Naive thymus-derived CD4-positive, alpha-beta T cell (primary cell): ENCODE measurements at regions of chr2 and their contacts with region 1.

Region 1: GRCh38 chr2:134897932-134898331 is 20.7 kb upstream of the CCNT2 start:
- DNase-seq: peak in 5 of 9 donors; percentile 6 to 31 (median 20)
- ATAC-seq: no peak
- H3K4me3 ChIP-seq: no peak overlapping the region
- H3K4me3 Mint-ChIP-seq: no peak overlapping the region
- H3K27ac ChIP-seq: no peak overlapping the region
- H3K27ac Mint-ChIP-seq: no peak overlapping the region
- H3K4me1 ChIP-seq: no peaks in the 10 kb centered on the region
- H3K4me1 Mint-ChIP-seq: no peaks in the 10 kb centered on the region
- H3K27me3 ChIP-seq: no peaks in the 10 kb centered on the region
- H3K27me3 Mint-ChIP-seq: peaks cover 0 to 40% (median 0%) of the 10 kb centered on the region in 5 donors

Region 2: DNA sequence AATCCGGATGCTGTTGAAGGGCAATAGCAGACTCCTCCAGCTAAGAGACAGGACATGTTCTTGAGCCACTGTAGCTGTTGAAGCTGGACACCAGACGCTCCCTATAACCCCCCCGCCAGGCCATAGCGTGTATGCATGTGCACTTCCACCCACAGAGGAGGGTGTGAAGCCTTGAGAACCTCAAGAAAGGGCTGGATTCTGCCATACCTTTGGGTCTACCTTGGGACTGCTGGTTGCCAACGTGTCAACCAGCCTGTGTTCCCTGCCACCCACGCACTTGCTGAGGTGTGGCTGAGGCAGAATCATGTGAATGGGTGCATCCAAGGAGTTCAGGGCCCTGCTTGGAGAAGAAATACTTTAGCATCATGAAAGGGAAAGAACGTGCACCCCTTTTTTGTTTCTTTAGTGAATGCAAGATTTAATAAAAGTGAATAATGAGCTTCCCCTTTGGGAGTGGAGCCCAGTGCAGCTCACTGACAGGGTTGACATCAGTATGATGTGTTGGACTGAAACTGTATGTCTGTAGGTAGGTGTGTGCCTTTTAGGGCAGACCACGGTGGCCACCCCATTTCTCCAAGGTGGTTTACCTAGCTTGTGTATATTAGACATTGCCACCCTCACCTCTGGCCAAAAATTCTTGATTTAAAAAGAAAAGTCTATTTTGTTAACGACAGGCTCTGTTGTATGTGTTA is 445.7 kb before region 1 on chr2:
- CTCF ChIA-PET with region 1: interaction called, 3 read pairs
- POLR2A ChIA-PET with region 1: no interaction called
- intact Hi-C with region 1: loop called (anchors 1 to 2 kb)
- DNase-seq: no peak
- ATAC-seq: no peak
- H3K4me3 ChIP-seq: no peak overlapping the region
- H3K4me3 Mint-ChIP-seq: no peak overlapping the region
- H3K27ac ChIP-seq: no peak overlapping the region
- H3K27ac Mint-ChIP-seq: peak overlapping the region in 4 of 9 donors; percentile 8 to 70 (median 32)
- H3K4me1 ChIP-seq: no peaks in the 10 kb centered on the region
- H3K4me1 Mint-ChIP-seq: peaks cover 0 to 2% (median 0%) of the 10 kb centered on the region in 7 donors
- H3K27me3 ChIP-seq: no peaks in the 10 kb centered on the region
- H3K27me3 Mint-ChIP-seq: no peaks in the 10 kb centered on the region

Region 3: DNA sequence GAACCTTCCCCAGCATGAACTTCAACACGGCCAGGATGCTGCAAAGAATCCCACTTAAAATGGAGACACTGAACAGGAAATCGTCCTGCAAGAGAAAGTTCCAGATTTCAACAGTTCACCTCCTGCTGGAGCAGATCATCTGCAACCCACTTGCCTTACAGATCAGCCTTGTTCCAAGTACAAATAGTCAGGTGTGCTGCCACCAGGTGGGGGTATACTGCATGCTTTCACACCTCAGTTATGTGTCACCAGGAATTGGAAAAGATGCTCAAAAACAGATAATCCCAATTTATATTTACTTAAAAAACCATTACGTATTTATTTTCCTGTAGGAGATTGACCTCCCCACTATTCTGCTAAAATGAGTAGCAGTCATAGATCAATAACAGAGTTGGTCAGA is 431.8 kb before region 1 on chr2:
- CTCF ChIA-PET with region 1: interaction called, 5 read pairs
- POLR2A ChIA-PET with region 1: no interaction called
- intact Hi-C with region 1: loop called (anchors 1 kb)
- DNase-seq: peak in 4 of 9 donors; percentile 14 to 31 (median 18)
- ATAC-seq: no peak
- H3K4me3 ChIP-seq: no peak overlapping the region
- H3K4me3 Mint-ChIP-seq: no peak overlapping the region
- H3K27ac ChIP-seq: no peak overlapping the region
- H3K27ac Mint-ChIP-seq: peak overlapping the region in 1 of 9 donors; percentile 86
- H3K4me1 ChIP-seq: no peaks in the 10 kb centered on the region
- H3K4me1 Mint-ChIP-seq: no peaks in the 10 kb centered on the region
- H3K27me3 ChIP-seq: no peaks in the 10 kb centered on the region
- H3K27me3 Mint-ChIP-seq: no peaks in the 10 kb centered on the region

Region 4: DNA sequence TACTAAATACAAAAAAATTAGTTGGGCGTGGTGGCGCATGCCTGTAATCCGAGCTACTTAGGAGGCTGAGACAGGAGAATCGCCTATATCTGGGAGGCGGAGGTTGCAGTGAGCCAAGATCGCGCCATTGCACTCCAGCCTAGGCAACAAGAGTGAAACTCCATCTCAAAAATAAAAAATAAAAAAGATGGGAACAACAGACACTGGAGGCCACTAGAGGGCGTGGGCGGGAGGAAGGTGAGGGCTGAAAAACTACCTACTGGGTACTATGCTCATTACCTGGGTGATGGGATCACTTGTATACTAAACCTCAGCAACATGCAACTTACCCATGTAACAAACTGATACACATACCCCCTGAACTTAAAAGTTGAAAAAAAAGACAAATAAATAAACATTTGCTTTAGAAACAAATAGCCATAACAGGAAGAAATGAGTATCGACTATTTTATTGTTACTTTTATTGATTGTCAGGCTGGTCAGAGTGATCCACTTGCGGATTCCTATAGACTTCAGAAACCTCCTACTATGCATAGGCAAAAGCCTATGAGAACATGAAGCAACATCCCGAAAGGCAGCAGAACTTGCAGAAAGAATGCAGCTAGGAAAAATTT is 240.2 kb before region 1 on chr2:
- CTCF ChIA-PET with region 1: interaction called, 3 read pairs
- POLR2A ChIA-PET with region 1: no interaction called
- intact Hi-C with region 1: loop called in 1 of 2 experiments (anchors 2 kb)
- DNase-seq: peak in 2 of 9 donors; percentile 15 to 18
- ATAC-seq: no peak
- H3K4me3 ChIP-seq: no peak overlapping the region
- H3K4me3 Mint-ChIP-seq: no peak overlapping the region
- H3K27ac ChIP-seq: no peak overlapping the region
- H3K27ac Mint-ChIP-seq: no peak overlapping the region
- H3K4me1 ChIP-seq: peaks cover 0 to 7% of the 10 kb centered on the region in 2 donors
- H3K4me1 Mint-ChIP-seq: peaks cover 9 to 39% (median 26%) of the 10 kb centered on the region in 7 donors
- H3K27me3 ChIP-seq: no peaks in the 10 kb centered on the region
- H3K27me3 Mint-ChIP-seq: peaks cover 0 to 11% (median 0%) of the 10 kb centered on the region in 5 donors